Panc1 (cell line): ENCODE measurements at regions of chr1 and their contacts with region 1.

Region 1: GRCh38 chr1:63099188-63099587 is 223.2 kb upstream of the FOXD3 start:
- DNase-seq: no peak
- ATAC-seq: no peak
- H3K4me3 ChIP-seq: no peak overlapping the region
- H3K27ac ChIP-seq: no peak overlapping the region
- H3K4me1 ChIP-seq: no peaks in the 10 kb centered on the region
- H3K27me3 ChIP-seq: peaks cover 9% of the 10 kb centered on the region
- CTCF ChIP-seq: no peak

Region 2: DNA sequence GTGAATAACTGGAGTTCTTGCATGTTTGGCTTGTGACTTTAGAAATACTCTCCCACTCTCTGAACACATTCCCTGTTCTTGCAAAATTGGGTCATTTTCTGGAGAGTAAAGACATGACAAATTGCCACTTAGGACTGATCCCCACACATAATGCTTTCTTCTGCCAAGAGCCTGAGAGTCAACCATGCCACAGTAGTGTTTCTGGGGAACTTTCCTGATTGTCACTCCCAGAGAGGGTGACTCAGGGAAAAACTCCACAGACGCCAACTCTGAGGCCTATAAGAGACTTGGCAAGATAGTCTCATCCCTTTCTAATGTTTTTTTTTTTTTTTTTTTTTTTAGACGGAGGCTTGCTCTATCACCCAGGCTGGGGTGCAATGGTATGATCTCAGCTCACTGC is 157.4 kb before region 1 on chr1:
- CTCF ChIA-PET with region 1: no interaction called
- POLR2A ChIA-PET with region 1: no interaction called
- in situ Hi-C with region 1: no loop called
- intact Hi-C with region 1: no loop called
- DNase-seq: no peak
- ATAC-seq: no peak
- H3K4me3 ChIP-seq: no peak overlapping the region
- H3K27ac ChIP-seq: no peak overlapping the region
- H3K4me1 ChIP-seq: no peaks in the 10 kb centered on the region
- H3K27me3 ChIP-seq: peaks cover 10% of the 10 kb centered on the region
- CTCF ChIP-seq: no peak

Region 3: DNA sequence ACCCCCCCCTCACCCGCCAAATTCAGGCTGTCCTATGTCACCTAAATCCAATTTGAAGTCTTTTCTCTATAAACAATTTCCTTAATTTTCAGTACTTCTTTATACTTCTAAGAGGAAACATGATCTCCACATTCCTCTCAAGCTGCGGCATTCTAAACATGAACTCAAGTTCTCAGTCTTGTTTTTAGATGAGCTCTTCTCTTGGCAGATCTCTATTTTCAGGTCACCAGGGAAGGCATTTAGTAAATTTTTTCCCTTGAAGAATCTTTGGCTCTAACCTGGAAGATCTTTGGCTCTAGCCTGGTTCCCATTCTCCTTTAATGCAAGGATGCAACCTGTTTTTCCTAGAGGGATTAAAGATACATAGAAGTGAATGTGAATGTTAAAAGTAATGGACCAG is 121.8 kb before region 1 on chr1:
- CTCF ChIA-PET with region 1: no interaction called
- POLR2A ChIA-PET with region 1: interaction called, 12 read pairs
- in situ Hi-C with region 1: no loop called
- intact Hi-C with region 1: no loop called
- DNase-seq: no peak
- ATAC-seq: no peak
- H3K4me3 ChIP-seq: no peak overlapping the region
- H3K27ac ChIP-seq: no peak overlapping the region
- H3K4me1 ChIP-seq: no peaks in the 10 kb centered on the region
- H3K27me3 ChIP-seq: peaks cover 19% of the 10 kb centered on the region
- CTCF ChIP-seq: no peak

Region 4: GRCh38 chr1:63143482-63143881 is 44.3 kb after region 1 on chr1:
- CTCF ChIA-PET with region 1: no interaction called
- POLR2A ChIA-PET with region 1: no interaction called
- in situ Hi-C with region 1: no loop called
- intact Hi-C with region 1: no loop called
- DNase-seq: no peak
- ATAC-seq: no peak
- H3K4me3 ChIP-seq: no peak overlapping the region
- H3K27ac ChIP-seq: no peak overlapping the region
- H3K4me1 ChIP-seq: no peaks in the 10 kb centered on the region
- H3K27me3 ChIP-seq: peaks cover 3% of the 10 kb centered on the region; the same call in 1 of the 2 replicates
- CTCF ChIP-seq: no peak

Region 5: GRCh38 chr1:63248216-63248615 is 149.0 kb after region 1 on chr1:
- CTCF ChIA-PET with region 1: no interaction called
- POLR2A ChIA-PET with region 1: no interaction called
- in situ Hi-C with region 1: no loop called
- intact Hi-C with region 1: no loop called
- DNase-seq: no peak
- ATAC-seq: no peak
- H3K4me3 ChIP-seq: no peak overlapping the region
- H3K27ac ChIP-seq: no peak overlapping the region
- H3K4me1 ChIP-seq: no peaks in the 10 kb centered on the region
- H3K27me3 ChIP-seq: no peaks in the 10 kb centered on the region
- CTCF ChIP-seq: no peak

Region 6: DNA sequence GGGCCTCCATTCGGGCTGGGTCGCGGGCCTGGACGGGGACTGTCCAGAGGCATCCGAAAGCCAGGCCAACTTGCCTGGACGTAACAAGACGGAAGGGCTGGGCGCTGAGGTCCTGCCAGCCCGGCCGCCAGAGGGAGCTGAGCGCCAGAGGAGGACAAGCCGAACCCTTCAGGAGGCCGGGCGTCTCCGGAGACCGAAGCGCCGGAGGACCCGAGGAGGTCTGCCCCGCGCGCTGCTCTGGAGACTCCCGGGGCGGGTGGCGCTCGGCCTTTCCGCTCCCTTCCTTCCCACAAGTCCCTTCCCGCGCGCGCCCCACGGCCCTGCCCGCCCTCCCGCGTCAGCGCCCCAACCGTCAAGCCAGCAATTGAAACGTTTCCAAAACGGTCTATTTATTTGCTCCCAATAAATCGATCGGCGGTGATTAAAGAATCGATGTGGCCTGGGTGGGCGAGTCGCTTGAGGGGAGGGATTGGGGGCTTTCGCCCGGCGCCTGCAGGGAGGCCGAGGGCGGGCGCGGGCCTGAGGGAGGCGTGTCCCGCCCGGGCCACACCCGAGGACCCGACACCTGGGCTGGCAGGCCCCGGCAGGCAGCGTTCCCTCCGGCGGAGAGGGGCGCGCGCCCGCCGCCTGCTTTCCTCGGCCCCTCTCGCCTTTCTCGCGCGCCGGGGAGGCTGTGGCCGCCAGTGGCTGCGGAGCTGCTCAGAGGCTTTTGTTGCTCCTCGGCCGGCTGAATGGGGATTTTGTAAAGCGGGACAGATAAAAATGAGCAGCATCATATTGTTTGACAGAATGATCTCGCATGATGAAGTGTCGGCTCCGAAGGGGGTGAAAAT is 218.0 kb after region 1 on chr1:
- CTCF ChIA-PET with region 1: no interaction called
- POLR2A ChIA-PET with region 1: no interaction called
- in situ Hi-C with region 1: no loop called
- intact Hi-C with region 1: no loop called
- DNase-seq: peak; percentile 35
- ATAC-seq: peak; percentile 96
- H3K4me3 ChIP-seq: peak overlapping the region; percentile 55 to 70
- H3K27ac ChIP-seq: peak overlapping the region; percentile 73
- H3K4me1 ChIP-seq: peaks cover 10% of the 10 kb centered on the region
- H3K27me3 ChIP-seq: no peaks in the 10 kb centered on the region
- CTCF ChIP-seq: peak; percentile 90